Heart left ventricle (tissue), 16 donors: ENCODE measurements at regions of chr17 and their contacts with region 1.

Region 1: DNA sequence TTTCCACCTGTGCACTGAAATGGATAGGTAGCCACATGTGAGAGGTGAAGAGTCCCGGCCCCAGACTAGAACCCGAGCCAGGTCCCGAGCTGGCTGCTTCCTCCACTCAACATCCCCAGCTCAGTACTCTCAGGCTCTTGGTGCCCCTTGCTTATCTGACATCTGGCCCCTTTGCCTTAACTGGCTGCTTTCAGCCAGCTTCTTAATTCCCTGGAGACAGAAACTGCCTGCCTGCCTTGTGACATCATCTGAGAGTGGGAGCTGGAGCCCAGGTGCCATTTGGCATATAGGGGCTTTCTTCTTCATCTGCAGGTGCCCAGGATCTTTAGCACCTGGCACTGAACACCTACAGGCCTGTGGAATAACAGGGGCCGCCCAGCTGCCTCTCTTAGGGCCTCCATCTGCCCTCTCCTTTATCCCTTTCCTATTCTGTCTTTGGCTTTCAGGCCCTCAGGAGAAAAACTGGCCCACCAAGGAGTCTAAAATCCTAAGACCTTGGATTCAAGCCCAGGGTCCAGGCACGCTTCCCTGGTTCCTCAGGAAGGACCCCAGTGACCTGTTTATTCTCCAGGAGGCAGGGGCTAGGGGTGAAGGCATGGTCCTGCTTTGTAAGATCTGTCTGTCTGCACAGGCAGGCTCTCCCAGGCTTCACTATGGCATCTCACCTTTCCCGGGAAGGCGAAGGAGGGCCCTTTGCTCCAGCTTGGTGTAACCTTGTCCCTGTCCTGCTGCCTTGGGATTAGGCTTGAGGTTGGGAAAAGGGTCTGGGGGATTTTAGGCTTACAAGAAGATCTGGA is 8.7 kb downstream of the CHAD start:
- DNase-seq: no peak
- ATAC-seq: no peak
- H3K4me3 ChIP-seq: no peak overlapping the region
- H3K27ac ChIP-seq: no peak overlapping the region
- H3K4me1 ChIP-seq: no peaks in the 10 kb centered on the region
- H3K27me3 ChIP-seq: no peaks in the 10 kb centered on the region
- CTCF ChIP-seq: no peak
- POLR2A ChIP-seq: no peak

Region 2: DNA sequence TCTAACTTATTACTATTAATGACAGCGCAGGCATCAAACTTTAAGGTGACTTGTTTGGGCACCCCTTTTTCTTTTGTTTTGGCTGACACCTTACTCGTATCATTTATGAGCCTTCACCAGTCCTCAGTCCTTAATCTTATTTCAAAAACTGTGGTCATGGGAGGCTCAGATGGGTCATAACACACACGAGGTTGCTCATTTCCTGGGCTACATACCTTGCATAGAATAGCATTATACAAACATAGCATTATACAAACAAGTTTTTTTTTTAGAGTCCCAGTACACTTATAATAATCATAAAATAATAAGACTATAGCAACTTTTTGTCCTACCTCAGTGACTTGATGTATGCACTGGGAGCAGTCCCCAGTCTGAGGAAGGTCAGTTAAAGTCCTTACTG is 45.1 kb before region 1 on chr17:
- intact Hi-C with region 1: loop called in 1 of 10 experiments (anchors 5 kb)
- DNase-seq: no peak
- ATAC-seq: no peak
- H3K4me3 ChIP-seq: no peak overlapping the region
- H3K27ac ChIP-seq: no peak overlapping the region
- H3K4me1 ChIP-seq: no peaks in the 10 kb centered on the region
- H3K27me3 ChIP-seq: peaks cover 0 to 1% (median 0%) of the 10 kb centered on the region in 9 donors
- CTCF ChIP-seq: no peak
- POLR2A ChIP-seq: no peak